Prostate gland (tissue), 2 donors: ENCODE measurements at regions of chr1 and their contacts with region 1.

Region 1: DNA sequence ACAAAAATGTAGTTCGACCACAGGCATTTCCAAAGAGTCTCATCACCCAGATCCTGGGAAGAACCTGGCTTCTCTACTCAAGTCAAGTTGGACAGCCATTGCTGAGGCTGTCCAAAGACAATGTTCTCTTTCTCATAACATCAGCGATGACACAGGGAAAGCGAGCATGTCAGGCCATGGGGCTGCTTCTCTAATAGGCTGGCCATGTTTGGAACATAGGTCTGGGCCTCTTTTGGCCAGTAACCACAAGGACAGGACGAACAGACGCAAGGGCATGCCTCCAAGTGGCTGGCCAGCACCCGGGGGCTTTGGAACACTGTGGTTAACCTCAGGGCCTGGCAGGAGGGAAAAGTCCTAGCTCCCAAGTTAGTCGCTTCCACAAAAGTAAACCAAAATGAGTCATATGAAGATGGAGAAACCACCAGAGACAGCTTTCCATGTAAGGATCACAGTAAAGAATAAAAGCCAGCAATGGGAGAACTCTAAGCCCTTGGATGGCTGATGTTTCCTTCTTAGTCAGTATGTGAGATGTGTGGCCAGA is 80.6 kb upstream of the SLC44A3 start:
- DNase-seq: no peak
- H3K4me3 ChIP-seq: no peak overlapping the region
- H3K27ac ChIP-seq: peak overlapping the region in 1 of 2 donors; percentile 12
- H3K4me1 ChIP-seq: peaks cover 5% of the 10 kb centered on the region
- H3K27me3 ChIP-seq: no peaks in the 10 kb centered on the region
- CTCF ChIP-seq: no peak
- POLR2A ChIP-seq: no peak

Region 2: GRCh38 chr1:94783342-94784264 is 44.0 kb after region 1 on chr1:
- intact Hi-C with region 1: loop called (anchors 5 kb)
- DNase-seq: peak; percentile 95
- H3K4me3 ChIP-seq: no peak overlapping the region
- H3K27ac ChIP-seq: peak overlapping the region; percentile 66 to 78
- H3K4me1 ChIP-seq: peaks cover 8% of the 10 kb centered on the region
- H3K27me3 ChIP-seq: no peaks in the 10 kb centered on the region
- CTCF ChIP-seq: peak in 2 of 4 experiments; percentile 18 to 32
- POLR2A ChIP-seq: no peak

Region 3: DNA sequence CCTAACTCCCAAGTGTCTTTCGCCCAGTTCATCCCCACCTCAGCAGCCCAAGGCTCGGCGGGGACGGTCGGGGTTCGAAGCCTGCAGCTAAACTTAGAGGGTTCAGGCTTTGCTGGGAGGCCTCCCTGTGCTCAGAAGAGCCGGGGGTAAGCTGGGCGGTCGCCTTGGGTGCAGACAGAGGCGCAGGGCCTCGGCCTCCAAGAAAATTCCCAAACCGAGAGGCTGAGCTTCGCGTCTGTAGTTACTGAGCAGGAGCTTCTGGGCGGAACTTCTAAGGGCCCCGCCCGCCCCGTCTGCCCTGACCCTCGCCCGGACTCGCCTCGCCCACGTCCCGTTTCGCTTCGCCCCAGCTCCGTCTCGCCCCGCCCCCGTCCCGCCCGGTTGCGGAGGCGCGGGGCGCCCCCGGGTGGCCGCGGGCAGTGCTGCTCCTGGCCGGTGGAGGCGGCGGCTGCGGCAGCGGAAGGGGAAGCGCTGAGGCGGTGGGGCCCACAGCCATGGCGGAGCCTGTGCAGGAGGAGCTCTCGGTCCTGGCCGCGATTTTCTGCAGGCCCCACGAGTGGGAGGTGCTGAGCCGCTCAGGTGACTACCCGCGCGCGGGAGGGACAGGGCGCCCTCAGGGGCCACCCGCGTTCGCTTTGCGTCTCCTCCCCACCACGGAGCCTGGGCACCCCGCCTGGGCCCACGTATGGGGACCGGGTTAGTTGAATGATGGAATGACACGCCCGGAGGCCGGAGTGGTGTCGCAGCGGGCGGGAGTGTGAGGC is 494.3 kb after region 1 on chr1 and contains the start of gene RWDD3:
- intact Hi-C with region 1: no loop called
- DNase-seq: peak; percentile 94
- H3K4me3 ChIP-seq: peak within 1 kb of the TSS; percentile 73 to 85
- H3K27ac ChIP-seq: peak within 1 kb of the TSS; percentile 84 to 85
- H3K4me1 ChIP-seq: peaks cover 3% of the 10 kb centered on the region
- H3K27me3 ChIP-seq: no peaks in the 10 kb centered on the region
- CTCF ChIP-seq: peak; percentile 64 to 95 (median 94)
- POLR2A ChIP-seq: peak; percentile 60
- total RNA-seq, gene RWDD3: 12.8 to 14.4 TPM